Mammary epithelial cell (primary cell): ENCODE measurements at regions of chr20 and their contacts with region 1.

Region 1: GRCh38 chr20:40265825-40266533 is 423.1 kb downstream of the MAFB start:
- DNase-seq: peak; percentile 36
- H3K4me3 ChIP-seq: no peak overlapping the region
- H3K27ac ChIP-seq: no peak overlapping the region
- H3K4me1 ChIP-seq: no peaks in the 10 kb centered on the region
- H3K27me3 ChIP-seq: no peaks in the 10 kb centered on the region
- CTCF ChIP-seq: peak; percentile 57 to 76

Region 2: DNA sequence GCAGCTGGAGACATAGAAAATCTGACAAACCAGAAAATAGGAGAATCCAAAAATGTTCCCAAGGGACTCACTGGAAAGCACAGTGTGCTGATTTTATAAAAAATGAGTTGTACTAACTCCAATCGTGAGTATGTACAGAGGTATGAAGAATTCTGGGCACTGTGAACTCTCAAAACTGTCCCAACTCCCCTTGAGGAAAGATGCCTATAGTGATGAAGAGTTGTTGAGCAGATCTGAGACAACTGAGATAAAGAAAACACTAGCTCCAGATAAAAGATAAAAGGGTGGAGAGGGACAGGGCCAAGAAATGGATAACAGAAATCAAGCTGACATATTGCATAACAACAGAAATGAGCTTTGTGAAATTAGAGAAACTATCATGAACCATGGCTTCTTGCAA is 58.3 kb before region 1 on chr20:
- CTCF ChIA-PET with region 1: no interaction called
- dilution Hi-C with region 1: no loop called
- in situ Hi-C with region 1: no loop called
- intact Hi-C with region 1: no loop called
- DNase-seq: no peak
- H3K4me3 ChIP-seq: no peak overlapping the region
- H3K27ac ChIP-seq: no peak overlapping the region
- H3K4me1 ChIP-seq: no peaks in the 10 kb centered on the region
- H3K27me3 ChIP-seq: peaks cover 2% of the 10 kb centered on the region
- CTCF ChIP-seq: no peak

Region 3: DNA sequence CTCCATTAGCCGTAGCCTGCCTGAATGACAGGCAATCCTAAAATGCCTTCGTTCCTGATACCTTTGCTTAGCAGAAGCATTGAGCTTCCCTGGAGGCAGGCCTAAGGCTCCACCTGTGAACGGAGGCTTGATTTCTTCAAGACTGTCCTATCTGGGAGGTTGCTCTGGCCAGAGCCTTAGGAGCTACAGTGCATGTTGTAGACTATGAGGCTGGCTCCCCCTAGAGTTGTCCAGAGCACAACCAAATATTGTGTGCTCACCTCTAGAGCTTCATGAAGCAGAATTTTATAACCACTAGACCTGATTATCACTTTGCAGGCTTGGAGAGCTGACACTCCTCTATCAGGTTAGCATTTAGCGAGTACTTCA is 205.3 kb after region 1 on chr20:
- CTCF ChIA-PET with region 1: no interaction called
- dilution Hi-C with region 1: no loop called
- in situ Hi-C with region 1: no loop called
- intact Hi-C with region 1: loop called (anchors 1 kb)
- DNase-seq: no peak
- H3K4me3 ChIP-seq: no peak overlapping the region
- H3K27ac ChIP-seq: no peak overlapping the region
- H3K4me1 ChIP-seq: no peaks in the 10 kb centered on the region
- H3K27me3 ChIP-seq: no peaks in the 10 kb centered on the region
- CTCF ChIP-seq: peak; percentile 13 to 39

Region 4: GRCh38 chr20:40506567-40506966 is 240.6 kb after region 1 on chr20:
- CTCF ChIA-PET with region 1: no interaction called
- dilution Hi-C with region 1: no loop called
- in situ Hi-C with region 1: no loop called
- intact Hi-C with region 1: loop called (anchors 1 kb)
- DNase-seq: peak; percentile 99
- H3K4me3 ChIP-seq: no peak overlapping the region
- H3K27ac ChIP-seq: peak overlapping the region; percentile 45
- H3K4me1 ChIP-seq: peaks cover 22% of the 10 kb centered on the region
- H3K27me3 ChIP-seq: no peaks in the 10 kb centered on the region
- CTCF ChIP-seq: peak in 1 of 2 donors; percentile 36

Region 5: GRCh38 chr20:40532103-40532502 is 266.1 kb after region 1 on chr20:
- CTCF ChIA-PET with region 1: no interaction called
- dilution Hi-C with region 1: no loop called
- in situ Hi-C with region 1: loop called in 1 of 2 experiments (anchors 25 kb)
- intact Hi-C with region 1: loop called (anchors 1 kb)
- DNase-seq: peak; percentile 32
- H3K4me3 ChIP-seq: no peak overlapping the region
- H3K27ac ChIP-seq: no peak overlapping the region
- H3K4me1 ChIP-seq: no peaks in the 10 kb centered on the region
- H3K27me3 ChIP-seq: no peaks in the 10 kb centered on the region
- CTCF ChIP-seq: peak; percentile 48 to 58